A549 (cell line): ENCODE measurements at regions of chr17 and their contacts with region 1.

Region 1: DNA sequence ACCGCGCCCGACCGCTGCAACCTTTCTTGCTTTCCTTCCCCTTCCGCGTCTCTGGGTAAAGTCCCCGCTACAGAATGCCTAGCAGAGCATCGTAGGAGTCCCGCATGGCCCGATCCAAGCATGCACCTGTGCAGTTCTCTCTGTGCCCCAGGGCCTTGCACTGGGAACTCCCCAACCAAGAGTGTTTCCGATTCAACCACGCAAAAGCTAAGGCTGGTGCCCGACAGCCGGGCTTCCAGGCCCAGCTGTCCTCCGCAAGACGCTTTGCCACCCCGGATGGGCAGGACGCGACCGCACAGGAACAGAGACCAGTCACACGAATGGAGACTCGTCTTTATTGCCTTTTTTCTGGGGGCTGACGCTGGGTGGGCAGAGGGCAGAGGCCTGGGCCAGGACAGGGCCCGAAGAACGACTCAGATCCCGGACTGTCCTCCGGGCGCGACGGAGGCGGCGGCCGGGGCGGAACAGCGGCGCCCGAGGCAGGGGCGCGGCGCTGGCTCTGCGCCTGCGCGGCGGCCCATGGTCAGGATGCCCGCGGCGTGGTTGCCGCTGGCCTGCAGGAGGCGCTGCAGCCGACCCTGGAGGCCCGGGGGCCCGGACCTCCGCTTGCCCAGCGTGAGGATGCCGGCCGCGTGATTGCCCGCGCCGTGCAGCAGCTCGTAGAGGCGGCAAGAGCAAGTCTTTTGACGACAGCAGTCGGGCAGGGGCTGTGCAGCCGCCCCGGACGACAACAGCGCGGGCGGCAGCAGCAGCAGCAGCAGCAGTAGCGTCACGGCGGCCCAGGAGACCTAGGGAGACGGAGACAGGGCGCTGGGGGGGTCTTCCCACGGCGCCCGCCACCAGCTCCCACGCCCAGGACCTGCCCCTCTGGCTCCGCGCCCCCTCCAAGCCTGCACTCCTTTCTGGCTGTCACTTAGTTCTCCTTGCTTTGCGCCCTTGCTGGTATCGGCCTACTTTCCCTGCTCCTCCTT is 1.2 kb downstream of the HCRT start:
- DNase-seq: peak; percentile 74 to 78
- ATAC-seq: peak; percentile 47 to 72
- H3K4me3 ChIP-seq: peak overlapping the region; percentile 48
- H3K27ac ChIP-seq: peak overlapping the region; percentile 74 to 87
- H3K4me1 ChIP-seq: peaks cover 38% of the 10 kb centered on the region
- CTCF ChIP-seq: peak; percentile 97
- EP300 ChIP-seq: no peak
- POLR2A ChIP-seq: peak; percentile 28; the same call in 1 of the 2 replicates
- RAD21 ChIP-seq: peak; percentile 37 to 58; a peak in 4 of 5 replicates

Region 2: DNA sequence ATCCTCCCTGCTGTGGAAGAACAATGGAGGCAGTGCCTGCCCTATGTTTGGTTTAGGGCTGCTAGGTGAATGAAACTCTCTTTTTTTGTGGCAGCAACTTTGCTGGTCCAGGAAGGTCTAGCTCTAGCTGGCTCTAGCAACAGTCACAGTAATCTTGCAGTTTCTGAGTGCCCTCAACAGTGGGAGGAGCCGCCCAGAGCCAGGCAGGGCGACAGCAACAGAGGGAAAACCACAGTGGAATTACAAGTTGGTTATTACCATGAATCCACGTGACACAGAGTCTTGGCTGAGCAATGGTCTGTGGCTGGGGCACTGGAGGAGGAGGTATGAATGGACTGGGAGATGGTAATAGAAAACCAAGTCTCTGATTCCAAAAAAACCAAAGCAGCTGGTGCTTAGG is 51.1 kb before region 1 on chr17:
- CTCF ChIA-PET with region 1: interaction called, 15 read pairs
- POLR2A ChIA-PET with region 1: interaction called, 5 read pairs
- DNase-seq: no peak
- ATAC-seq: no peak
- H3K4me3 ChIP-seq: no peak overlapping the region
- H3K27ac ChIP-seq: no peak overlapping the region
- H3K4me1 ChIP-seq: peaks cover 37% of the 10 kb centered on the region
- CTCF ChIP-seq: no peak
- EP300 ChIP-seq: no peak
- POLR2A ChIP-seq: no peak
- RAD21 ChIP-seq: no peak

Region 3: GRCh38 chr17:42163113-42163512 is 20.9 kb before region 1 on chr17:
- CTCF ChIA-PET with region 1: interaction called, 17 read pairs
- POLR2A ChIA-PET with region 1: no interaction called
- DNase-seq: peak; percentile 49 to 53
- ATAC-seq: peak in 1 of 2 experiments; percentile 67; a peak in 3 of 6 replicates
- H3K4me3 ChIP-seq: no peak overlapping the region
- H3K27ac ChIP-seq: no peak overlapping the region
- H3K4me1 ChIP-seq: no peaks in the 10 kb centered on the region
- CTCF ChIP-seq: peak; percentile 39
- EP300 ChIP-seq: no peak
- POLR2A ChIP-seq: no peak
- RAD21 ChIP-seq: peak in 1 of 2 experiments; percentile 42; a peak in 1 of 5 replicates

Region 4: GRCh38 chr17:42193969-42194899 is 10.2 kb after region 1 on chr17 and contains the start of gene GHDC:
- CTCF ChIA-PET with region 1: interaction called, 76 read pairs
- POLR2A ChIA-PET with region 1: no interaction called
- DNase-seq: peak; percentile 83 to 92
- ATAC-seq: peak; percentile 97
- H3K4me3 ChIP-seq: peak within 1 kb of the TSS; percentile 79
- H3K27ac ChIP-seq: peak within 1 kb of the TSS; percentile 91 to 94
- H3K4me1 ChIP-seq: peaks cover 8% of the 10 kb centered on the region; the same call in 2 of the 3 replicates
- CTCF ChIP-seq: no peak
- EP300 ChIP-seq: no peak
- POLR2A ChIP-seq: peak; percentile 56
- RAD21 ChIP-seq: no peak
- polyA plus RNA-seq, gene GHDC: 12.3 and 14.2 TPM in 2 replicates

Region 5: DNA sequence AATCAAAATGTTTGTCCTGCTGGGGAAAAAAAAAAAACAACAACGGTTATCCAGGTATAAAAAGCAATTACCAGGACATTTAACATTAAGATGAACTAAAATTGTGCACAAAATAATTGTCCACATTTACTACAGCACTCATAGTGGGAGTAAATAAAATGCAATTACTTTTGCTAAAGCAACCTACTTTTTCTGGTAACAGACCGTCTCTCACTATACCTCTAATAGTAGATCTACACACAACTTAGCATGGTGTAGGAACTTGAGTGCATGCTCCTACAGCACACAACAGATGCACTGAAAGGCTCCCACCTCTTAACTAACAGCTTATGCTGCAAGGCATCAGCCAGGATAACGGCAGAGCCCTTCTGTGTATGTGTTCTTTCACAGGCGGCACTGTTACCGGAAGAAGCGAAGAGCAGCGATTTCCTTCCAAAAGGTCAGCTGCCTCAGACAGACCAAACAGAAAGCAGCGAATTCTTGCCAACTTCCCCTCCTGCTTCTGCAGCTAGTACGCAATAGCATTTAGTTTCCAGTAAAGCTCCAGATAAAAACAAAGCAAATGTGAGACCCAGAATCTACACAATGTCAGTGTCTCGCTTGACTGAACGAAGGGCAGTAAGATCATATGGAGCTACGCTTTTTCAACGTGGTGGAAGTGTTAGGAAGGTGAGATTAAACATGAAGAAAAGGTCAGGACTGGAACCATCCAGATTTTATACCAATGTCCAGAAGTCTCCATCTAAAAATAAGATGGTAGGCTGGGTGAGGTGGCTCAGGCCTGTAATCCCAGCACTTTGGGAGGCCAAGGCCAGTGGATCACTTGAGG is 64.5 kb after region 1 on chr17:
- CTCF ChIA-PET with region 1: interaction called, 13 read pairs
- POLR2A ChIA-PET with region 1: no interaction called
- DNase-seq: no peak
- ATAC-seq: no peak
- H3K4me3 ChIP-seq: no peak overlapping the region
- H3K27ac ChIP-seq: no peak overlapping the region
- H3K4me1 ChIP-seq: peaks cover 39% of the 10 kb centered on the region
- CTCF ChIP-seq: no peak
- EP300 ChIP-seq: no peak
- POLR2A ChIP-seq: no peak
- RAD21 ChIP-seq: no peak